ENCODE measurements at regions of chr9 and their contacts with region 1.

Region 1: DNA sequence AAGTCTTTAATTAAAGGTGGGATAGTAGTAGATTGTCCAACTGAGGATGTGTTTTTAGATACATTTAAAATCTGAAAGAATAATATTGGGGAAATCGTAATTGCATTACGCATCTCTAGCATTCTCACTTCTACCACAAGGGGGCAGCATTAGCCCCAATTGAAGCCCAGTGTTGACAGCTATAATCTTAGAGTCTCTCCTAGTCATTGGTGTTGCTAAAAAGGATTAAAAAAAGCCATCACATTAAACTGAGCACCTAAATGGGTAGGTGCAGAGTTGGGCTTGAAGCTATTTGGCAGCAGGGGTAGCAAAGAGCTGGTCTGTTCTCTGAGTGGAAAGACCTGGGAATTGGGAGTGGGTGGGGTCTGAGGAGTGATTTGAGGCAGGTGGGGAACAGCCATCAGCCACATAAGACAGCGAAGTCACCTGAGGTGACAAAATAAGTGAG is 177.2 kb downstream of the OSTF1 start:
- DNase-seq: no peak
- H3K4me3 ChIP-seq: no peak overlapping the region
- H3K27ac ChIP-seq: no peak overlapping the region
- H3K4me1 ChIP-seq: no peaks in the 10 kb centered on the region
- H3K27me3 ChIP-seq: no peaks in the 10 kb centered on the region
- CTCF ChIP-seq: peak; percentile 47 to 81 (median 79)
- POLR2A ChIP-seq: no peak

Region 2: GRCh38 chr9:75866273-75866871 is 600.8 kb after region 1 on chr9:
- intact Hi-C with region 1: loop called (anchors 10 kb)
- DNase-seq: no peak
- H3K4me3 ChIP-seq: no peak overlapping the region
- H3K27ac ChIP-seq: no peak overlapping the region
- H3K4me1 ChIP-seq: no peaks in the 10 kb centered on the region
- H3K27me3 ChIP-seq: no peaks in the 10 kb centered on the region
- CTCF ChIP-seq: peak; percentile 34 to 60 (median 50)
- POLR2A ChIP-seq: no peak